Prostate gland (tissue), 2 donors: ENCODE measurements at regions of chr14 and their contacts with region 1.

Region 1: DNA sequence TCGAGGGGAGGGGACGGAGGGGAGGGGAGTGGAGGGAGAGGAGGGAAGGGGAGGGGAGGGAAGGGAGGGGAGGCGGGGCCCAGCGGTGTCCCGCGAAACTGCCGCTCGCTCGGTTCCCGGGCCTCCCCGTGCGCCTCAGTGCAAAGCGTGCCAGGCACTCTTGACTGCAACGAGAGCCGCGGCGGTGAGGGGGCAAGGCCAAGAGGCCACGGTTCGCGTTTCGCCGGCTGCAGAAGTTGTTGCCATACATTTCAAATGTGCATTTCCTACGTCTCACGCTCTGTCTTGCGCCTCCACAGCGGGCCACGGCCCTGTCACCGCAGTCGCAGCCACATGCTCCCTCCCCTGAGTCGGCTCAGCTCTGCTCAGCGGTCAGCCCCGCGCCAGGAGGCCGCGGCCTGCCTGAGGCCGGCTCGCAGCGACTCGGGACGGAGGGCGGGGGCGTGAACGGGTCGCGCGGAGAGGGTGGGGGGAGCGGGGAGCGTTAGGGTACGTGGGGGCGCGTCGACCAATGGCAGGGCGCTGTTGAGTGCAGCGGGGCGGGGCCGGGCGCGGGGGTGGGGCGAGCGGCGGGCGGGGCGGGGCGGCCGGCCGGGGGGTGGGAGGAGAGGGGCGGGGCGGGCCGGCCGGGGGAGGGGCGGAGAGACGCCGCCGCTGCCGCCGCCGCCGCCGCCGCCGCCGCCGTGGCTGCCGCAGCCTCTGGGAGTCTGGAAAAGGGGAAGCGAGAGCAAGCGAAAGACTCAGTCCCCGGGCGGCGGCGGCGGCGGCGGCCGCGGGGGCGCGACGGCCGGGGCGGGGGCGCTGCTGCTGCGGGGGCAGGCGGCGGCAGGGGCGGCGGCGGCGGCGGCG is at the start of gene PPP2R5C:
- DNase-seq: peak; percentile 89
- H3K4me3 ChIP-seq: peak within 1 kb of the TSS; percentile 83 to 84
- H3K27ac ChIP-seq: peak within 1 kb of the TSS; percentile 95 to 96
- H3K4me1 ChIP-seq: peaks cover 5% of the 10 kb centered on the region
- H3K27me3 ChIP-seq: no peaks in the 10 kb centered on the region
- CTCF ChIP-seq: peak in 1 of 4 experiments; percentile 23
- POLR2A ChIP-seq: peak; percentile 84
- total RNA-seq, gene PPP2R5C: 67.8 to 96.2 TPM

Region 2: DNA sequence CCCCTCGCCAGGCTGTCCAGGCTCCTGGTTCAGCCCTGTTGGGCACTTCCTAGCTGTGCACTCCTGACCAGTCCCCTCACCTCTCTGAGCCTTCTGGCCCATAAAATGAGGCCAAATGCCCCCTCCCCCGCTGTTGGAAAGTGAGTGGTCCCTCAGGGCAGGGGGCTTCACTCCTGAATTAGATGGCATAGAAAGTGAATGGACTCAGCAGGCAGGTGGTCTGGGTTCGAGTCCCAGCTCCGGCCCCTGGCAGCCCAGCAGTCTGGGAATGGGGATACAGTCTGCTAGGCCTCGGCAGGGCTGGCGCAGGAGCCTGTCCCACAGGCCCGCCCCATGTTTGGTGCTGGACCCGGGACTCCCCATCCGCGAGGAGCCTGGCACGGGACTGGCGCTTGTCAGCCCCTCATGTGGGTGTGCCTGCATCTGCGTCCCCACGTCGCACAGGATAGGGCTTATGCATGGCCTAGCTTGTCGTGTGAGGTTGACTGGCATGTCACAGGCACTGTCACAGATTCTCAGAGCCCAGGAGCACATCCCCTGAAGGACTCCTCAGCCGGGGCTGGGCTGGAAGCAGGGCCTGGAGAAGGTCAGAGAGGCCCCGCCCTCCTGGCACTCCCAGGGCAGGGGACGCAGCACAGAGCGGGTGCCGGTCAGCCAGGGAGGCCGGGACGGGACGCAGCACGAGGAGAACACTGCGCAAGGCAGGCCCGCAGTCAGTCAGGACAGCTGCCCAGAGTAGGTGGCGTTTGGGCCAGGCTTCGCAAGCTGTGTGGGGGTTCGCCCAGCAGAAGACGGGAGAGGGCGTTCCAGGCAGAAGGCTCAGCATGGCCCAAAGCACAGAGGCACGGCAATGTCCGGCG is 159.4 kb before region 1 on chr14:
- intact Hi-C with region 1: no loop called
- DNase-seq: no peak
- H3K4me3 ChIP-seq: no peak overlapping the region
- H3K27ac ChIP-seq: no peak overlapping the region
- H3K4me1 ChIP-seq: no peaks in the 10 kb centered on the region
- H3K27me3 ChIP-seq: no peaks in the 10 kb centered on the region
- CTCF ChIP-seq: no peak
- POLR2A ChIP-seq: no peak

Region 3: DNA sequence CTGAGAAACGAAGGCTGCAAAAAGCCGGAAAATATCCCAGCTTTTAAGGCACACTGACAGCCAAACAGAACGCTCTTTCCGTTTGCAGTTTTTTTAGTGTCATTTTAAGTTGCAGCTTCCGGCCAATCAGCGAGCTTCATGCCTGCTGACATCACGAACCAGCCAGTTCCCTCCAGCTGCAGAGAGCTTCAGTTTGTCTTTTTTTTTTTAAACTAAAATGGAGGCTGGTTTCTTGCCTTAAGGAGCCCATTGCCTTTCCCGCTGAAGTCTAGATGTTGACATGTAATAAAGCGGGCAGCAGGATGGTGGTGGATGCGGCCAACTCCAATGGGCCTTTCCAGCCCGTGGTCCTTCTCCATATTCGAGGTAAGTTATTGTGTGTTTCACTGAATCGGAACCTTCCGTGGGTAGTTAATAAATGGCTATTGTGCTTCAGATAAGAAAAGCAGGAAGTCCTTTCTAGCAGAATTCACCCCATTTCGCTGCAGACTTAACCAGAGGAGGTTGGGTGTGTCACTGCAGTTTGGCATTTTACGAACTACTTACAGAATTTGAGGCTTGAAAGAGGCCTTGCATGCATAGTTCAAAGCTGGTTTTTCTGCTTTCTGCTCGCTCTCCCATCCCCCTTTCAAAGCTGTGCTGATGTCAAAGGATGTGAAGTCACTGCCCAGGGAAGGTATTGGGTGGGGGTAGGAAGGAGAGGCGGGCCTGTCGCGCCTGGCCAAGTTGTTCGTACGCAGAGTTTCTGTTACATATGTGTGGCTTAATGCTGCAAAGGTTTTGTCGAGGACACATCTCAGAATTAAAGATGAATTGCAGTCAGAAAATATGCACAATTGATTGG is 48.6 kb after region 1 on chr14:
- intact Hi-C with region 1: loop called (anchors 1 kb)
- DNase-seq: peak; percentile 92
- H3K4me3 ChIP-seq: peak overlapping the region; percentile 41 to 58
- H3K27ac ChIP-seq: peak overlapping the region; percentile 94 to 99
- H3K4me1 ChIP-seq: peaks cover 12% of the 10 kb centered on the region
- H3K27me3 ChIP-seq: no peaks in the 10 kb centered on the region
- CTCF ChIP-seq: no peak
- POLR2A ChIP-seq: peak; percentile 78